ENCODE measurements at regions of chr6 and their contacts with region 1.

Region 1: DNA sequence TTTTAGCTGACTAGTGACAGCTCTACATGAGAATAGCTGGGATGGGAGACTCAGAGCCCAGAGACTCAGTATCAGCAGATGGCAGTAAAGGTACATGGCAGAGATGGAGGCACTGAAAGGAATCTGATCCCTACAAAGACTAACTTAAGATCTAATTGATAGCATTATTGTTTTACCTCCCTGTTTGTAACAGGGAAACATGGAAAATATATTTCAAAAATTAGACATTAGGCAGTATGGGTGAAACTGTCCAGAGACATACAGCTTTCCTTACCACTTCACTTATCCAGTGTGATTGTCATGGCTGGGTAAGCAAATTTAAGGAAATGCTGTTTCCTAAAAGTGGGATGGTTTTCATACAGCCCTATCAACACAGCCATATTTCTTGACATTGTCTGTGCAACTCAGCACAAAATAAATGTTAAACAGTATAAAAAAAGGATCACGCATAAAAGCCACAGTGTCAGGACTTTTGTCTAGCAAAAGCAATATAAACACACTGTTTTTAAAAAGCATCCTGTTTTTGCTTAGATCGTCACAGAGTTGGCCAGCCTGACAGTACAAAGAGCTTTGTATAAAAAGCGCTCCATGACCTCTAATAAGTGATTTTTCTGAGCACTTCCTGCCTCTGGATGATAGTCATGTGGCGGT is 376.9 kb downstream of the PHF3 start:
- H3K4me3 ChIP-seq: no peak overlapping the region
- H3K27ac ChIP-seq: no peak overlapping the region
- H3K4me1 ChIP-seq: no peaks in the 10 kb centered on the region
- CTCF ChIP-seq: peak; percentile 23; the same call in 1 of the 2 replicates

Region 2: DNA sequence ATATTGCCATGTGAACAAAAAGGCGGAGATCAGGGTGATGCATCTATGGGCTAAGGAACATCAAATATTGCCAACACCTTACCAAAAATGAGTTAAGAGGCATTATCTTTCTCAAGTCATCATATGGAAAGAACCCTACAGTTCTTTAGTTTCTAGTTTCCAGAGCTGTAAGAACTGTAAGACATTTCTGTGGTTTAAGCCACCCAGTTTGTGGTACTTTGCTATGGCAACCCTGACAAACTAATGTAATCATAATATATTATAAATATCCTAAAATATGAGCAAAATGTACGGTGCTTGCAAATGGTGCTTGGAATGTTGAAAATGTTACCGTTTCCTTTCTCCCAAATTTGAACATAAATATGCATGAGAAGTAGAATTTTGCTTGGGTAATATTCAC is 27.3 kb before region 1 on chr6:
- CTCF ChIA-PET with region 1: no interaction called
- POLR2A ChIA-PET with region 1: no interaction called
- H3K4me3 ChIP-seq: no peak overlapping the region
- H3K27ac ChIP-seq: no peak overlapping the region
- H3K4me1 ChIP-seq: no peaks in the 10 kb centered on the region
- CTCF ChIP-seq: no peak

Region 3: GRCh38 chr6:64280569-64280968 is 268.1 kb after region 1 on chr6:
- CTCF ChIA-PET with region 1: interaction called, 17 read pairs
- POLR2A ChIA-PET with region 1: no interaction called
- H3K4me3 ChIP-seq: no peak overlapping the region
- H3K27ac ChIP-seq: no peak overlapping the region
- H3K4me1 ChIP-seq: no peaks in the 10 kb centered on the region
- CTCF ChIP-seq: no peak

Measured in HEK293 (cell line).